HAP-1 (cell line): ENCODE measurements at regions of chr2 and their contacts with region 1.

Region 1: DNA sequence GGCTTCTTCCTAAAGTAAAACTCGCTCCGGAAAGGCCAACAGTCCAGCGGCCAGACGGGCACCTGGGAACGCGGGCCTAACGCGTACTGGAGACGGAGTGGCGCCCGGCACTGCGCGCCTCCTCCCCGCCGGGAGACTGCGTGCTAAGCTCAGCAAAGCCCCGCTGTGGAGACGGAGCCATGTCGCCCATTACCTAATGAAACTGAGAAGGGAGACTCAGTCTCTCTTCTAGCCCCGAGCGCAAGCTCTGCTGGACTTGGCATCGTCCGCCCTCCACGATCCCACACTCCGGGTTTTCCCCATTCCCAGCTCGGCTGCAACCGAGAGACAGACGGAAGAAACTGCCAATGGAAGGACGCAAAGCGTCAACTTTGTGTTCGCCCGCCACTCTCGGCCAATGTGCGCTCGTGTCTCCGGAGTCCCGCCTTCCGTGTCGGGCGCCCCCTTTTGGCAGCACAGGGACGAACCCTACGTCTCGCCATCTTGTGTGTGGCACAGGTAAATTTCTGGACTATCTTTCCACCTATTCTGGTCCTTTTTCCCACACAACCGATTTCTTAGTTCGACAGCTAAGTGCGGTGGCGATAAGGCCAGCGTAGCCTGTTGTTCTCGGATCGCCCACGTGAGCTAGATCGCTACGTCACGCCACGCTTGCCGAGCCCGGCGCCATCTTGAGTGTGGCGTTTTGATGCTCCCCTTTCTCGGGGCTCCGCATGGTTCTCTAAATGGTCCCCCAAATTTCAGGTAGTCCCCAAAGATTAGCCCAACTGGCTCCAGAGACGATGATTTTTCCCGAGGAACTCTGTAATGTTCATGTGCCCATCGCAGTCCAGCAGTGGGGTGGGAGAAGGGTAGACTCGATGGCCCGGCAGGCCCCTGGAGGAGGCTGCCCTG is 1.3 kb upstream of the PTMA start:
- DNase-seq: peak; percentile 93 to 98
- H3K4me3 ChIP-seq: peak overlapping the region; percentile 99
- H3K4me1 ChIP-seq: peaks cover 13% of the 10 kb centered on the region
- H3K27me3 ChIP-seq: no peaks in the 10 kb centered on the region

Region 2: GRCh38 chr2:231662028-231662810 is 44.8 kb before region 1 on chr2:
- in situ Hi-C with region 1: loop called (anchors 5 kb)
- DNase-seq: peak; percentile 94 to 96
- H3K4me3 ChIP-seq: peak overlapping the region; percentile 32
- H3K4me1 ChIP-seq: peaks cover 23% of the 10 kb centered on the region
- H3K27me3 ChIP-seq: no peaks in the 10 kb centered on the region